Psoas muscle (tissue), 8 donors: ENCODE measurements at regions of chr10 and their contacts with region 1.

Region 1: GRCh38 chr10:73406846-73407245 is 7.0 kb downstream of the ANXA7 start:
- DNase-seq: no peak
- ATAC-seq: no peak
- H3K4me3 ChIP-seq: no peak overlapping the region
- H3K27ac ChIP-seq: no peak overlapping the region
- H3K4me1 ChIP-seq: peaks cover 62% of the 10 kb centered on the region
- H3K27me3 ChIP-seq: no peaks in the 10 kb centered on the region
- CTCF ChIP-seq: no peak

Region 2: DNA sequence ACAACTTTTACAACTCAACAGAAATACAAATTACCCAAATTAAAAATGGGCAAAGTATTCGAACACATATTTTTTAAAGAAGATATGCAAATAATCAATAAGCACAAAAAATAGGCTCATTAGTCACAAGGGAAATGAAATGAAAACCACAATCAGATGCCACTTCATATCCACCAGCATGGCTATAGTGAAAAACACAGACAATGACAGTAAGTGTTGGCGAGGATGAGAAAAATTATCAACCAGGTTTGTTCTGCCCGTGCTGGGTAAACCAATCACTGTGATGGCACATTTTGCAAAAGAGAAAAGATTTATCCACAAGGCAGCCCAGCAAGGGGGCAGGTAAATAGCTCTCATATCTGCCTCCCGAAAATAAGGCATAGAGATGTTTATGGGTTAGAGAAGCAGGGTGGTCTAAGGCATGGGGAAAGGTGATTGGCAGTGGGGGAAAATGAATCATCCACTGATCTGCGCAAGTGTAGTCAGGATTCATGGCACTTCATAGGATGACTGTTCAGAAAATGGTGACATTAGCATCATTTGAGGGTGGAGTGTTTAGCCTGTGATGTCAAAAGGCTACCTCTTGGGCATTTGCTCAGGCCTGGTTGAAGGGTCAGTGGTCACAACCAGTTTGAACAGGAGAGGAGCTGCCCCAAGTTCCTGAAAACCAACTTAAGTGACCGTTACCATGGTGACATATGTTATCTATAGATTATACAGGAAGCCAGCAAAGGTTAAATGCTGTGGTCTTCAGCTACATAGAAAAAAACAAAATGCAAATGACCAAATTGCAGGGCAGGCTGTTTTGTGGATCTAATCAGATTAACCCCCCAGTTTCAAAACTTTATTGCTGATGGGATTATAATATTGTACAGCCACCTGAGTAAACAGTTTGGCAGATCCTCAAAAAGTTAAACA is 40.2 kb before region 1 on chr10:
- intact Hi-C with region 1: loop called in 1 of 2 experiments (anchors 1 kb)
- DNase-seq: no peak
- ATAC-seq: peak in 1 of 4 donors; percentile 10
- H3K4me3 ChIP-seq: no peak overlapping the region
- H3K27ac ChIP-seq: no peak overlapping the region
- H3K4me1 ChIP-seq: no peaks in the 10 kb centered on the region
- H3K27me3 ChIP-seq: no peaks in the 10 kb centered on the region
- CTCF ChIP-seq: no peak

Region 3: GRCh38 chr10:73388228-73388627 is 18.6 kb before region 1 on chr10:
- intact Hi-C with region 1: no loop called
- DNase-seq: no peak
- ATAC-seq: peak in 3 of 4 donors; percentile 53 to 79 (median 78)
- H3K4me3 ChIP-seq: no peak overlapping the region
- H3K27ac ChIP-seq: peak overlapping the region; percentile 3
- H3K4me1 ChIP-seq: no peaks in the 10 kb centered on the region
- H3K27me3 ChIP-seq: no peaks in the 10 kb centered on the region
- CTCF ChIP-seq: no peak

Region 4: DNA sequence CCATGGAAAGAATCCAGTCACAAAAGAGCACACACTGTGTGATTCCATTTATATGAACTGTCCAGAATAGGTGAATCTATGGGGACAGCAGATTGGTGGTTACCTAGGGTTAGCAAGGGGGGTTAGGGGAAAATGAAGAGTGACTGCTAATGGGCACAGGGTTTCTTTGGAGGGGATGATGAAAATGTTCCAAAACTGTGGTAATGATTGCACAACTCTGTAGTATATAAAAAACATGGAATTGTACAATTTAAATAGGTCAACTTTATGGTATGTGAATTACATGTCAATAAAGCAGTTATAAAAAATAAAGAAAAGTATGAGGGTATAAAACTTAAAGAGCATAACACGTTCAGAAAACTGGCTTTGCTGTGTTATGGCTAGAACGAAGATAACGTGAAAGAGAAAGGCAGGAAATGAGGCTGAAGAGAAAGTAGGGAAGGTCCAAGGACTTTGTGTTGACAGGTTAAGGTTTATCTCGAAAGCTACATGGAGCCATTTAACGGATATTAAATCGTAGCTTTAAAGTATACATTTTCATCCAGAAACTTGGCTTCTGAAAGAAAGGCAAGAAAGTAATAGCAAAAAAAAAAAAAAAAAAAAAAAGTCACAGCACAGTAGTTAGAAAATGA is 53.0 kb after region 1 on chr10:
- intact Hi-C with region 1: no loop called
- DNase-seq: no peak
- ATAC-seq: no peak
- H3K4me3 ChIP-seq: no peak overlapping the region
- H3K27ac ChIP-seq: peak overlapping the region; percentile 46
- H3K4me1 ChIP-seq: peaks cover 4% of the 10 kb centered on the region
- H3K27me3 ChIP-seq: no peaks in the 10 kb centered on the region
- CTCF ChIP-seq: no peak